Esophagus muscularis mucosa (tissue), 4 donors: ENCODE measurements at regions of chr9 and their contacts with region 1.

Region 1: DNA sequence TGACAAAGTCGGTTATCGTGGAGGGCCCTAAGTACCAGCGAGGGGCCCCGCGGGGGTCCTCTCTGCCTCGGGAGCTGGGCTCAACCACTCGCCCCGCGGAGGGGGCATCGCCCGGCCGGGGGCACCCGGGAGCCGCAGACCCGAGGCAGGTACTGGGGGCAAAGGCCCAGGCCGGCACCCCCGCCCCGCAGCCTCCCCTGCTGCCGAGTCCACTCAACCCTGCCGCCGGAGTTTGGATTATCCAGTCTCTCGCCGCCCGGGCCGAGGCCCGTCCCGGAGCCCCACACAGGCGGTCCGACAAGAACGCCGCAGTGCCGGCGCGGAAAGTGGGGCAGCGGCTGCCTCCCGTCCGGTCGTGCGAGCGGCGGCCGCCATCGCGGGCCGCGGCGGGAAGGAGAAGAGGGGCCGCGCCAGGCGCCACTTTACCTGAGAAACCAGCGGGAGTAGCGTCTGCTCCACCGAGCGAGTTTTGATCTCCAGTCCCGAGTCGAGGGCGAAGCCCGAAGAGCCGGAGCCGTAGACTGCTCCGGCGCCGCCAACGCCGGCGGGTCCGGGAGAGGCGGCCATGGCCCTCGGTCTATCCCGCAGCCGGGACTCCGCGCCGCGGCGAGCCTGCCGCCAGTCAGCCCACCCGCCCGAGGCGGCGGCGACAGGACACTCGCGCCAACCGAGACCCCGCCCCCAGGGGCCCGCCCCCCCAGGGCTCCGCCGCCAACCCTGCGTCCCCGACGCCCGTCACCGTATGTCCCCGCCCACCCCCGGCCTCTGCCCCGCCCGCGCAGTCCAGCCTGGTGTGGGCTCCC is at the start of gene CTNNAL1:
- DNase-seq: peak; percentile 98
- H3K4me3 ChIP-seq: peak within 1 kb of the TSS; percentile 81 to 99 (median 92)
- H3K27ac ChIP-seq: peak within 1 kb of the TSS; percentile 96 to 99 (median 99)
- H3K4me1 ChIP-seq: peaks cover 41 to 52% (median 50%) of the 10 kb centered on the region in 4 donors
- H3K27me3 ChIP-seq: no peaks in the 10 kb centered on the region
- CTCF ChIP-seq: no peak
- EP300 ChIP-seq: no peak
- POLR2A ChIP-seq: peak; percentile 76
- total RNA-seq, gene CTNNAL1: 59.6 to 88.9 (median 69.6) TPM

Region 2: GRCh38 chr9:108654566-108654965 is 358.5 kb before region 1 on chr9:
- intact Hi-C with region 1: no loop called
- DNase-seq: no peak
- H3K4me3 ChIP-seq: no peak overlapping the region
- H3K27ac ChIP-seq: no peak overlapping the region
- H3K4me1 ChIP-seq: no peaks in the 10 kb centered on the region
- H3K27me3 ChIP-seq: no peaks in the 10 kb centered on the region
- CTCF ChIP-seq: no peak
- EP300 ChIP-seq: no peak
- POLR2A ChIP-seq: no peak

Region 3: GRCh38 chr9:108786901-108787689 is 226.0 kb before region 1 on chr9:
- intact Hi-C with region 1: no loop called
- DNase-seq: no peak
- H3K4me3 ChIP-seq: no peak overlapping the region
- H3K27ac ChIP-seq: no peak overlapping the region
- H3K4me1 ChIP-seq: peaks cover 0 to 26% (median 9%) of the 10 kb centered on the region in 4 donors
- H3K27me3 ChIP-seq: no peaks in the 10 kb centered on the region
- CTCF ChIP-seq: no peak
- EP300 ChIP-seq: no peak
- POLR2A ChIP-seq: no peak

Region 4: DNA sequence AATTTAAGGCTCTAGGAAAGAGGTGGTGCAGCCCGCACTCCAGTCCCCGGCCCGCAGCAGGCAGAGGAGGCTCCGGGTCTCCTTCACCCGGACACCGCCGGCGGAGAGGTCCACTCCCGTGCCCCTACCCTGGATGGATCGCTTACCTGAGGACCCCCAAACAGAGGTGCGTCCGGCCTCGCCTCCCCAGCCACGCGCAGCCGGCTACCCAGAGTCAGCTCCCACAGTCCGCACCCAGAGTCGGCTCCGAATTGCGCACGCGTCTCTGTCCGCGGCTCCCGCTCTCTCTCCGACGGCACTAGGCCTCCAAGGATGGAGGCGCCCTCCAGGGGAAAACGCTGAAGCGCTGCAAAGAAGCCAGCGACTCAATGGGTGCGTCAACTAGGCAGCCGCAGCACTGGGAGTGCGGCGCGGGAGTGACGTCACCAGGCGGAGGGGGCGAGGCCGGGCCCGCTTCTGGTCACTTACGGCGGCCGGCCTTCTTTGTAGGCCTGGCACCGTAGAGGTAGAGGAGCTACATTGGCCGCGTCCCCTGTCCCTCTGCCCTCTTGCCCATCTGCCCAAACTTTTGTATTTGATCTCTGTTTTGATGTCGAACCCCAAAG is 79.3 kb before region 1 on chr9 and contains the start of gene ELP1:
- intact Hi-C with region 1: loop called (anchors 5 kb)
- DNase-seq: peak; percentile 98
- H3K4me3 ChIP-seq: peak within 1 kb of the TSS; percentile 72 to 92 (median 80)
- H3K27ac ChIP-seq: peak within 1 kb of the TSS; percentile 89 to 94 (median 90)
- H3K4me1 ChIP-seq: peaks cover 21 to 34% (median 26%) of the 10 kb centered on the region in 4 donors
- H3K27me3 ChIP-seq: no peaks in the 10 kb centered on the region
- CTCF ChIP-seq: peak in 2 of 3 experiments; percentile 10 to 13
- EP300 ChIP-seq: no peak
- POLR2A ChIP-seq: no peak
- total RNA-seq, gene ELP1: 14.1 to 16.2 (median 14.5) TPM

Region 5: GRCh38 chr9:108953983-108954574 is 59.0 kb before region 1 on chr9:
- intact Hi-C with region 1: loop called (anchors 5 kb)
- DNase-seq: no peak
- H3K4me3 ChIP-seq: no peak overlapping the region
- H3K27ac ChIP-seq: peak overlapping the region in 3 of 4 donors; percentile 50 to 57 (median 55)
- H3K4me1 ChIP-seq: peaks cover 7 to 12% (median 10%) of the 10 kb centered on the region in 4 donors
- H3K27me3 ChIP-seq: no peaks in the 10 kb centered on the region
- CTCF ChIP-seq: peak; percentile 64 to 70 (median 64)
- EP300 ChIP-seq: no peak
- POLR2A ChIP-seq: no peak

Region 6: GRCh38 chr9:109098171-109098959 is 85.3 kb after region 1 on chr9:
- intact Hi-C with region 1: loop called (anchors 5 kb)
- DNase-seq: no peak
- H3K4me3 ChIP-seq: peak overlapping the region in 2 of 4 donors; percentile 2 to 4
- H3K27ac ChIP-seq: peak overlapping the region; percentile 71 to 81 (median 74)
- H3K4me1 ChIP-seq: peaks cover 67 to 95% (median 95%) of the 10 kb centered on the region in 4 donors
- H3K27me3 ChIP-seq: no peaks in the 10 kb centered on the region
- CTCF ChIP-seq: peak in 2 of 3 experiments; percentile 24 to 37
- EP300 ChIP-seq: no peak
- POLR2A ChIP-seq: no peak

Region 7: GRCh38 chr9:109119439-109120203 is 106.5 kb after region 1 on chr9 and contains the start of gene TMEM245:
- intact Hi-C with region 1: loop called (anchors 5 kb)
- DNase-seq: peak; percentile 98
- H3K4me3 ChIP-seq: peak within 1 kb of the TSS; percentile 69 to 99 (median 90)
- H3K27ac ChIP-seq: peak within 1 kb of the TSS; percentile 87 to 98 (median 94)
- H3K4me1 ChIP-seq: peaks cover 34 to 49% (median 48%) of the 10 kb centered on the region in 4 donors
- H3K27me3 ChIP-seq: no peaks in the 10 kb centered on the region
- CTCF ChIP-seq: no peak
- EP300 ChIP-seq: no peak
- POLR2A ChIP-seq: no peak
- total RNA-seq, gene TMEM245: 109 to 192 (median 137) TPM